WTC11 (cell line): ENCODE measurements at regions of chr17 and their contacts with region 1.

Region 1: GRCh38 chr17:29640413-29640812 is 17.7 kb upstream of the CORO6 start:
- DNase-seq: no peak
- ATAC-seq: no peak
- H3K4me3 Mint-ChIP-seq: no peak overlapping the region
- H3K27ac Mint-ChIP-seq: peak overlapping the region; percentile 38
- H3K4me1 Mint-ChIP-seq: peaks cover 28% of the 10 kb centered on the region
- H3K27me3 Mint-ChIP-seq: no peaks in the 10 kb centered on the region
- CTCF ChIP-seq: no peak

Region 2: DNA sequence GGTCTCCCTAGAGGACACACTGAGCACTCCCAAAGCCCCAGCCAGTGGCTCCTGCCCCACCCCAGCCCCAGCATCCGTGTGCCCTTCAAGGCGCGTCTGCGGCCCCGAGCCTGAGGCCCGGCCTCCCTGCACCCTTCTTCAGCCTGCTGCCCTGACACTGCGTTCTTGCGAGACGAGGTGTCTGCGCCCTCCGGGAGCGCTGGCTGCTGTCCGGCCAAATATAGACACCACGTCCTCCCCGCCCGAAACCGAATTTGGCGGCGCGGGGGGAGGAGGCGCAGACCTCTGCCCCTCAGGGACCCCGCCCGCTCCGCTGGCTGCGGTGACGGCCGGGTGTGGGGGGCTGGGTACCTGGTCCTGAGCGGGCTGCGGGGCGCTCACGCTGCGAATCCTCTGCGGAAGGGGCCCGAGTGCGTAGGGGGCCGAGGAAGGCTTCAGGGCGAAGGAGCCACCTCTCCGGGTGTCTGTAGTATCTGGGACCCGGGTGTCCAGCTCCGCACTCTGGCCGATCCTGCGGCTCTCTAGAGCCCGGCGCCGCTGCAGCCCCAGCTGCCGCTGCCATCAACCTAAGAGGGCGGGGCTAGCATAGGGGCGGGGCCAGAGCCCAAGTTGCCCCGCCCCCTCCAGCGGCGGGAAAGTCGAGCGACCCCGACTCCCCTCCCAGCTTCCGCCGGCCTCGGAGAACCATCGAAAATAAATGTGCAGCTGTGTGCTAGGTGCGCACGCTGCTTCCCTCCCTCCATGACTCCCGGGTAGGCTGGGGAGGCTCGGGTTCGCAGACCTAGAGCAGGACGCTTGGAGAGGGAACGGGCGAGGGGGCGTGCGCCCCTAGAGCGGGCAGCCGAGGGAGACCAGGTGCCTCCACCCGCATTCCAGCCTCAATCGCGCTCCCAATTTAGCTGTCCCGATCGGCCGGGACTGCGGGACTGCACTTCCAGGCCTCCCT is 17.8 kb before region 1 on chr17 and contains the start of gene CORO6:
- CTCF ChIA-PET with region 1: interaction called, 58 read pairs
- POLR2A ChIA-PET with region 1: interaction called, 5 read pairs
- DNase-seq: peak; percentile 86
- ATAC-seq: peak; percentile 58
- H3K4me3 Mint-ChIP-seq: peak within 1 kb of the TSS; percentile 79
- H3K27ac Mint-ChIP-seq: peak within 1 kb of the TSS; percentile 82
- H3K4me1 Mint-ChIP-seq: peaks cover 48% of the 10 kb centered on the region
- H3K27me3 Mint-ChIP-seq: peaks cover 65% of the 10 kb centered on the region
- CTCF ChIP-seq: no peak
- total RNA-seq, gene CORO6: 6.4 to 8.9 TPM (median 7.5 TPM) in 3 replicates

Region 3: GRCh38 chr17:29682054-29682453 is 41.6 kb after region 1 on chr17:
- CTCF ChIA-PET with region 1: interaction called, 12 read pairs
- POLR2A ChIA-PET with region 1: no interaction called
- DNase-seq: no peak
- ATAC-seq: no peak
- H3K4me3 Mint-ChIP-seq: no peak overlapping the region
- H3K27ac Mint-ChIP-seq: no peak overlapping the region
- H3K4me1 Mint-ChIP-seq: peaks cover 11% of the 10 kb centered on the region
- H3K27me3 Mint-ChIP-seq: no peaks in the 10 kb centered on the region
- CTCF ChIP-seq: no peak

Region 4: DNA sequence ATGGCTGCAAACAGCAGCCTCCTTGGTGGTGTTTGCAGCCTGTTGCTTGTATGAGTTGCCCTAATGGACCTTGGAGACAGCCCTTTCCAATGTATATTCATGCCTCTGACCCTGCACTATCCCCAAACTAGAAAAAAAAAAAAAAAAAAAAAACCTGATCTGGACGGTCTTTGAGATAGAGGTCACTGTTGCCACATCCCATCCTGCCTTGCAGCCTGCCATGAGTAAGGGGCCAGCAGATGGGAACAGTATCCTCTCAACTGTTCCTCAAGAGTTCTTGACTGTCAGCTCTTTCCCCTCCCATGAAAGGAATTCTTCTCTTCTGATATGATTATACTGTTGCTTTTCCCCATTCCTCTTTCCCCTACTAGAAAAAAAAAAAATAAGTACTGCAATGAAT is 137.2 kb after region 1 on chr17:
- CTCF ChIA-PET with region 1: interaction called, 116 read pairs
- POLR2A ChIA-PET with region 1: no interaction called
- DNase-seq: no peak
- ATAC-seq: no peak
- H3K4me3 Mint-ChIP-seq: no peak overlapping the region
- H3K27ac Mint-ChIP-seq: no peak overlapping the region
- H3K4me1 Mint-ChIP-seq: no peaks in the 10 kb centered on the region
- H3K27me3 Mint-ChIP-seq: no peaks in the 10 kb centered on the region
- CTCF ChIP-seq: no peak

Region 5: GRCh38 chr17:29807520-29808351 is 167.3 kb after region 1 on chr17:
- CTCF ChIA-PET with region 1: interaction called, 57 read pairs
- POLR2A ChIA-PET with region 1: no interaction called
- DNase-seq: peak; percentile 62
- ATAC-seq: peak; percentile 65
- H3K4me3 Mint-ChIP-seq: no peak overlapping the region
- H3K27ac Mint-ChIP-seq: no peak overlapping the region
- H3K4me1 Mint-ChIP-seq: peaks cover 6% of the 10 kb centered on the region; the same call in 1 of the 2 replicates
- H3K27me3 Mint-ChIP-seq: no peaks in the 10 kb centered on the region
- CTCF ChIP-seq: peak; percentile 64

Region 6: DNA sequence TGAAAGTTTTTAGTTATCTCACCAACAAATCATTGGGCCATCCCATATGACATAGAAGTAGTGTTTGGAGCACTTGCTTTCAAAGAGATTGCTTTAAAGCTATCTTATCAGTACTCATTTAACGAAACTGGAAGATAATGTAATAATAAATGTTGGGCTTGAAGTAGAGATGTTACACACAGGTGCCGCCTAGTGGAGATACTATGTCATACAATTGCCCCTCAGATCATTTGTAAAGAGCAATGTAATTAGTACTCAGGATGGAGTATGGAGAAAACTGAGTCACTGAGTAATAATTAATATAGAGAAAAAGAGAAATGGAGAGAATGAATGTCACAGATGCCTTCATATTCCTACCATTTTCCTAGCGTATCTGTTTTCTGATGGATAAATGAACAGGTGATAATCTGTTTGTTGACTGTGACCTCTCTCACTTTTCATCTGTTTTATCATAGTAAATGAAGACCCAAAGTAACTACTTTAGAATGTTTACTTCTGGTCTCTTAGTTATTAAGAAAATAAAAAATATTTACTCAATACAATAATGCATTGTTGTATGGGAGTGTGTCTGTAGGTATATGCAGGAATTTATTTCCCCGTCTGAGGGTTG is 381.4 kb after region 1 on chr17:
- CTCF ChIA-PET with region 1: interaction called, 12 read pairs
- POLR2A ChIA-PET with region 1: no interaction called
- DNase-seq: no peak
- ATAC-seq: peak; percentile 56; the same call in 1 of the 2 replicates
- H3K4me3 Mint-ChIP-seq: no peak overlapping the region
- H3K27ac Mint-ChIP-seq: no peak overlapping the region
- H3K4me1 Mint-ChIP-seq: no peaks in the 10 kb centered on the region
- H3K27me3 Mint-ChIP-seq: peaks cover 2% of the 10 kb centered on the region; the same call in 1 of the 2 replicates
- CTCF ChIP-seq: peak; percentile 84